GM12878 (cell line): ENCODE measurements at regions of chr2 and their contacts with region 1.

Region 1: GRCh38 chr2:75053484-75054112 is 95.2 kb downstream of the POLE4 start:
- DNase-seq: peak; percentile 69
- ATAC-seq: peak; percentile 78
- H3K4me3 ChIP-seq: no peak overlapping the region
- H3K27ac ChIP-seq: no peak overlapping the region
- H3K4me1 ChIP-seq: peaks cover 22% of the 10 kb centered on the region
- H3K27me3 ChIP-seq: no peaks in the 10 kb centered on the region
- CTCF ChIP-seq: peak; percentile 80 to 92 (median 88); a peak in 5 of 6 replicates
- EP300 ChIP-seq: no peak
- POLR2A ChIP-seq: no peak
- RAD21 ChIP-seq: peak; percentile 92

Region 2: GRCh38 chr2:75041731-75042600 is 11.6 kb before region 1 on chr2:
- CTCF ChIA-PET with region 1: interaction called, 38 read pairs
- POLR2A ChIA-PET with region 1: interaction called, 3 read pairs
- RAD21 ChIA-PET with region 1: interaction called, 3 read pairs
- SMC1A ChIA-PET with region 1: interaction called, 22 read pairs
- in situ Hi-C with region 1: no loop called
- intact Hi-C with region 1: no loop called
- DNase-seq: no peak
- ATAC-seq: peak; percentile 61
- H3K4me3 ChIP-seq: no peak overlapping the region
- H3K27ac ChIP-seq: no peak overlapping the region
- H3K4me1 ChIP-seq: no peaks in the 10 kb centered on the region
- H3K27me3 ChIP-seq: no peaks in the 10 kb centered on the region
- CTCF ChIP-seq: no peak
- EP300 ChIP-seq: no peak
- POLR2A ChIP-seq: no peak
- RAD21 ChIP-seq: no peak

Region 3: GRCh38 chr2:75098856-75099255 is 45.3 kb after region 1 on chr2:
- CTCF ChIA-PET with region 1: interaction called, 13 read pairs
- POLR2A ChIA-PET with region 1: no interaction called
- RAD21 ChIA-PET with region 1: no interaction called
- SMC1A ChIA-PET with region 1: interaction called, 7 read pairs
- in situ Hi-C with region 1: no loop called
- intact Hi-C with region 1: no loop called
- DNase-seq: no peak
- ATAC-seq: peak; percentile 87
- H3K4me3 ChIP-seq: no peak overlapping the region
- H3K27ac ChIP-seq: no peak overlapping the region
- H3K4me1 ChIP-seq: no peaks in the 10 kb centered on the region
- H3K27me3 ChIP-seq: no peaks in the 10 kb centered on the region
- CTCF ChIP-seq: peak; percentile 47 to 50 (median 48); a peak in 5 of 6 replicates
- EP300 ChIP-seq: no peak
- POLR2A ChIP-seq: no peak
- RAD21 ChIP-seq: peak; percentile 53

Region 4: GRCh38 chr2:75241696-75242095 is 188.1 kb after region 1 on chr2:
- CTCF ChIA-PET with region 1: interaction called, 4 read pairs
- POLR2A ChIA-PET with region 1: no interaction called
- RAD21 ChIA-PET with region 1: interaction called, 4 read pairs
- SMC1A ChIA-PET with region 1: interaction called, 5 read pairs
- in situ Hi-C with region 1: no loop called
- intact Hi-C with region 1: loop called (anchors 2 kb)
- DNase-seq: no peak
- ATAC-seq: 0 out of 3 replicates have a peak, but pooled peaks have one; percentile 14
- H3K4me3 ChIP-seq: no peak overlapping the region
- H3K27ac ChIP-seq: no peak overlapping the region
- H3K4me1 ChIP-seq: no peaks in the 10 kb centered on the region
- H3K27me3 ChIP-seq: no peaks in the 10 kb centered on the region
- CTCF ChIP-seq: peak; percentile 20 to 46 (median 30); a peak in 5 of 6 replicates
- EP300 ChIP-seq: no peak
- POLR2A ChIP-seq: no peak
- RAD21 ChIP-seq: peak; percentile 63

Region 5: DNA sequence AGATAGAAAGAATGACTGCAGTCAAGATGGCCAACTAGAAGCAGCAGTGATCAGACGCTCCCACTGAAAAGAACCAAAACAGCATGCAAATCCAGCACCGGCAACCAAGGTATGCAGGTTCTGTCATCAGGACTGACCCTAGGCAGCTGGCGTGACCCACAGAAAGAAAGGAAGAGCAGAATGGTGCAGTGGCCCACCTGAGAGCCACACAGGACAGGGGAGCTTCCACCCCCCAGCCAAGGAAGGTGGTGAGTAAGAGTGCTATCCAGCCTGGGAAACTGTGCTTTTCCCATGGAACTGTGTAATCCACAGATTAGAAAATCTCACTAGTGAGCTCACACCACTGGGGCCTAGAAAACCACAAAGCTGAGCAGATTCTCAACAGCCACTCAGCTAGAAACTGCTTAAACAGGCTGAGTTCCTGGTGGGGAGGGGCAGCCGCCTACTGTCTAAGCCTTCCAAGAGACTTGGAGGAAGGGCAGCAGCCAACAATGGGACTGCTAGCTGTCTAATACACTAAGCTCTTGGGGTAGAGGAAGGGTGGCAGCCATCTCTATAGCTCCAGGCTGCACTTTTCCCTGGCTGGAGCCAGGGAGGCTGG is 379.3 kb after region 1 on chr2:
- CTCF ChIA-PET with region 1: interaction called, 8 read pairs
- POLR2A ChIA-PET with region 1: interaction called, 19 read pairs
- RAD21 ChIA-PET with region 1: interaction called, 56 read pairs
- SMC1A ChIA-PET with region 1: interaction called, 117 read pairs
- in situ Hi-C with region 1: no loop called
- intact Hi-C with region 1: loop called (anchors 1 kb)
- DNase-seq: peak; percentile 96
- ATAC-seq: peak; percentile 86
- H3K4me3 ChIP-seq: peak overlapping the region; percentile 31
- H3K27ac ChIP-seq: peak overlapping the region; percentile 95
- H3K4me1 ChIP-seq: peaks cover 45% of the 10 kb centered on the region
- H3K27me3 ChIP-seq: no peaks in the 10 kb centered on the region
- CTCF ChIP-seq: no peak
- EP300 ChIP-seq: peak; percentile 50 to 69; a peak in 2 of 4 replicates
- POLR2A ChIP-seq: peak; percentile 66
- RAD21 ChIP-seq: peak; percentile 40